Heart right ventricle (tissue), 16 donors: ENCODE measurements at regions of chr2 and their contacts with region 1.

Region 1: DNA sequence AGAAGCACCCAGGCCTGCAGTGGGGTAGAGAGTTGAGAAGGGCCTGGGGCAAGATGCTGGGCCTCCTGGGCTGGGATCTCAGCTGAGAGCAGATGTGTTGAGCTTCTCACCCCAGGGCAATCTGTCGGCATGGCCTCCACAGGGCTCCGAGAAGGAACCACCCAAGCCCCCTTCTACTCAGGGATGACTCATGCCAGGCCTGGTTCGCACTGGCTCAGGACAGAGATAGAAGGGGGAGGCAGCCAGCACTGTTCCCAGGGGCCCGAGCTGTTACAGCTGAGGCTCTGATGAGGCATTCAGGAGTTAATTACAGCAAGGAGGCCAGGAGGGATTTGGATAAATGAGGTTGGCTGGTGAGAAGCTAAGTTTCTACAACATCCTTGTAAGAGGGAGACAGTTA is 62.5 kb downstream of the CENPO start:
- DNase-seq: peak in 1 of 2 donors; percentile 51
- ATAC-seq: peak in 7 of 8 donors; percentile 5 to 80 (median 33)
- H3K4me3 ChIP-seq: no peak overlapping the region
- H3K27ac ChIP-seq: peak overlapping the region; percentile 40 to 85 (median 77)
- H3K4me1 ChIP-seq: peaks cover 0 to 41% (median 14%) of the 10 kb centered on the region in 9 donors
- H3K27me3 ChIP-seq: no peaks in the 10 kb centered on the region
- CTCF ChIP-seq: no peak

Region 2: DNA sequence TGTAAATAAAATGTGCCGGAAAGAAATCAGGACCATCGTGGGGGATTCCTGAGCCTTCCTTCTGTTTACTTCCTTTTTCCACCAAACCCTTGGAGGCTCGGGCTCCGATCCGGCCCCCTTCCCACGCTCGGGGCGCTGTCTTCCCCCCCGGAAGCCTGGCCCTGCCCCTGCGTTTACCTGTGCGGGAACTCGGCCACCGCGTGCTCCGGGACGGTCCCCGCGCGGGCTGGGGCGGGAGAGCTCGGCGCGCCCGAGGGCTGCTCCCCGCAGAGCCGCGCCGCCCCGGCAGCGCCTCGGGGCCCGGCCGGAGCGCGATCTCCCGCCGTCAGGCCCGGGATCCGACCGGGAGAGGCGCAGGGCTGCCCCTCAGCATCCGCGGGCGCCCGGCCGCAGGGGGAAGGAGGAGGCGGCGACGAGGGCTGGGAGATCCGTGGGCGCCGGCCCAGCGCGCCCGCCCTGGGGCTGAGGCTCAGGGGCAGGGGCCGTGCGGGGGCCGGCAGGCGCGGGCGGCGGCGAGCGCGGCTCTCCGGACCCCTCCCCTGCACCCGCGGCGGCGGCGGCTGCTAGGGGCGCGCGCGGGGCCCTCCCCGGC is 63.9 kb after region 1 on chr2:
- intact Hi-C with region 1: loop called in 3 of 10 experiments (anchors 5 to 10 kb)
- DNase-seq: no peak
- ATAC-seq: peak in 3 of 8 donors; percentile 2 to 17 (median 11)
- H3K4me3 ChIP-seq: peak overlapping the region; percentile 27 to 75 (median 60)
- H3K27ac ChIP-seq: peak overlapping the region in 9 of 10 donors; percentile 28 to 80 (median 69)
- H3K4me1 ChIP-seq: peaks cover 0 to 35% (median 8%) of the 10 kb centered on the region in 9 donors
- H3K27me3 ChIP-seq: peaks cover 0 to 12% (median 0%) of the 10 kb centered on the region in 7 donors
- CTCF ChIP-seq: no peak

Region 3: GRCh38 chr2:24971536-24972314 is 116.0 kb after region 1 on chr2 and contains the start of gene DNAJC27:
- intact Hi-C with region 1: loop called in 1 of 10 experiments (anchors 5 kb)
- DNase-seq: peak; percentile 98 to 99
- ATAC-seq: peak; percentile 95 to 98 (median 97)
- H3K4me3 ChIP-seq: peak within 1 kb of the TSS; percentile 65 to 93 (median 78)
- H3K27ac ChIP-seq: peak within 1 kb of the TSS; percentile 95 to 100 (median 98)
- H3K4me1 ChIP-seq: peaks cover 0 to 35% (median 11%) of the 10 kb centered on the region in 9 donors
- H3K27me3 ChIP-seq: no peaks in the 10 kb centered on the region
- CTCF ChIP-seq: peak in 1 of 9 donors; percentile 8
- total RNA-seq, gene DNAJC27: 7.2 to 13.1 (median 10.5) TPM